ENCODE measurements at regions of chr6 and their contacts with region 1.

Region 1: DNA sequence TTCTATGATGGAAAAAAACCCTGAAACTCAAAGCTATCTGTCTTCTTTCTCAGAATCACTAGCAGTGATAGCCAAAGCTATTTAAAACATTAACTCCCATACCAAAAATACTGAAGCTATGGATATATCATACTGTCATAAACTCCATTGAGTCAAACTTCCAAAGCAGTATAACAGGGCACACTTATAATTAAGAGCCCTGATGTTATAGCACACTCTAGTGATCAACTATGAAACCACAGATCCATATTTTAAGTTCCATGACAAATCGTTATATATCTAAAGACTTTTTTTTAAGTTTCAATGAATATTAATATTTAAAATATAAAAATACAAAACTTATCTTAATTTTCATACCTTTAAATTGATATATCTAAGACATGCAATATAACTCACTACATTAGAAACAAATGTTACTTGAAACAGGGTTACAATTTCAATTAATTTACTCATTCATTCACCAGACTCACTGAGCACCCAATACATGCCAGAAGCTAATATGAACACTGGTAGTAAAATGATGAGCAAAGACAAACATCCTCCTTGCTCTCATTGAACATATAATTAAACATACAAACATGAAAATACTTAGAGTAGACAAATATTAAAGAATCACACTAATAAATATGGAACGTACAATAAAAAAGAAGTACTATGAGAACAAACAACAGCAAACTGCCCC is 69.3 kb downstream of the IBTK start:
- DNase-seq: no peak
- ATAC-seq: peak; percentile 55 to 87 (median 85)
- H3K4me3 ChIP-seq: no peak overlapping the region
- H3K27ac ChIP-seq: no peak overlapping the region
- H3K4me1 ChIP-seq: peaks cover 0 to 8% (median 0%) of the 10 kb centered on the region in 12 donors
- H3K27me3 ChIP-seq: no peaks in the 10 kb centered on the region
- CTCF ChIP-seq: peak; percentile 34 to 80 (median 63)
- POLR2A ChIP-seq: no peak

Region 2: DNA sequence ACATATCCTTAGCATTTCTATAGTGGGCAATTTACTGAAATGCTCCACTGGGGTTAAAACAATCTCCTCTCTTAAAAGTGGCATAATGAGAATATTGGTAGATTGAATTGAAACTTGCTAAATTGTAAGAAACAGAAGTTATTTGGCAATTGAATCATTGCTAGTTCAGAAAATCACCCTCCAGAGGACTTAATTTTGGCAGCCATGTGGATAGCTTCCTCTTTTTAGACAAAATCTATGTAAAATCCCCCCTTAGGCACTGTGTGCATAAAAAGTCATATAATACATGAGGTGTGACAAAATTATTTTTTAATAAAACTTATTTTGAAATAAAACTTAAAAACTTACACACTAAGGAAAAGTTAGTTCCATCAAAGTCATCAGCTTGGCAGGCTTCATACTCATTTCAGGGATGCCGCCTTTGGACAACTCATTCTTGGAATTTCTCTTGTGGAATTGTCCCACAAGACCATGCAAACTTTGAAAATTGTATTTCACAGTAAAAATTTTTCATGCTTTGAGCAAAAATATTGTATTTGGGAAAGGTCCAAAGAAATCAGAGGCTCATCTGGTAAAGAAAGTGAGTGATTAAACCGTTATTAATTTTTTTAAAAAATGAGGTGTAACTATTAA is 1598.7 kb before region 1 on chr6:
- intact Hi-C with region 1: no loop called
- DNase-seq: no peak
- ATAC-seq: no peak
- H3K4me3 ChIP-seq: no peak overlapping the region
- H3K27ac ChIP-seq: no peak overlapping the region
- H3K4me1 ChIP-seq: peaks cover 0 to 6% (median 0%) of the 10 kb centered on the region in 12 donors
- H3K27me3 ChIP-seq: no peaks in the 10 kb centered on the region
- CTCF ChIP-seq: no peak
- POLR2A ChIP-seq: no peak

Region 3: DNA sequence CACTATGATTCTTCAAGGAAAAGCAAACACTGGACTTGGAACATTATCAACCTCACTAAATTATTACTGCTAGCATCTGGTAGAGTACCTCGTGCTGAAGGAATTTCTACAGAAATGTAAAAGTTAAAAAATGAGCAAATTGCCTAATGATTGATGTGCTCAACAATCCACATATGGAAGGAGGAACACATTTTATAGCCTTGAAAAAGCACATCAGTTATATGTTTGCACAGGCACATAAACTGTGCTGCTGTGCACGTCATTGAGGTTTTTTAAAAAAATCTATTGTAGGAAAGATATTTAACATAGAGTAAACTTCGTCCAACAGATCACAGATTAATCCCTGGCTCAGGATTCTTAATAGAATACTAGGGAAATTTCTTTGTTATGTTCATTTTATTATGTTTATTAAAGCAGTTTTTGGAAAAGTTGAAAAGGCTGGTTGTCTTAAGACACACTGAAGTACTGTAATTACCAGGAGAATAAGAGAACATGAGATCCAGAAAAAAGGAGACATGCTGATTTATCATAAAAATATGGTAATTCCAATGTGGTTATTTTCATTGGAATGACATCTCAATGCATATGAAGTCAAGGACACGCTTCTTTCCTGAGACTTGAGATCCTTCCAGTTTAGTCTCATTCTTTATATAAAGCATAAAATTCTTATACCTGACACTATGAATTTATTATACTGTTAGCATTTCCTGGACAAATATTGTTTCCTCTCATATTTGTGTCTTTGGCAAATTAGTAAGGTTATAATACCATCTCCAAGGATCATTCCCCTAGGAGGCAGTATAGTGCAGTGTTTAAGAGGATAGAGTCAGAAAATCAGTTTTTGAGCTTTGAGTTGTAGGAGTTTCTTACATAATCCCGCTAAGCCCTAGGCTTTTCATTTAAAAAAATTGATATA is 936.8 kb before region 1 on chr6:
- intact Hi-C with region 1: loop called in 3 of 10 experiments (anchors 2 to 10 kb)
- DNase-seq: no peak
- ATAC-seq: peak in 2 of 4 donors; percentile 45 to 55
- H3K4me3 ChIP-seq: no peak overlapping the region
- H3K27ac ChIP-seq: no peak overlapping the region
- H3K4me1 ChIP-seq: no peaks in the 10 kb centered on the region
- H3K27me3 ChIP-seq: no peaks in the 10 kb centered on the region
- CTCF ChIP-seq: peak in 11 of 12 donors; percentile 22 to 60 (median 42)
- POLR2A ChIP-seq: no peak

Region 4: DNA sequence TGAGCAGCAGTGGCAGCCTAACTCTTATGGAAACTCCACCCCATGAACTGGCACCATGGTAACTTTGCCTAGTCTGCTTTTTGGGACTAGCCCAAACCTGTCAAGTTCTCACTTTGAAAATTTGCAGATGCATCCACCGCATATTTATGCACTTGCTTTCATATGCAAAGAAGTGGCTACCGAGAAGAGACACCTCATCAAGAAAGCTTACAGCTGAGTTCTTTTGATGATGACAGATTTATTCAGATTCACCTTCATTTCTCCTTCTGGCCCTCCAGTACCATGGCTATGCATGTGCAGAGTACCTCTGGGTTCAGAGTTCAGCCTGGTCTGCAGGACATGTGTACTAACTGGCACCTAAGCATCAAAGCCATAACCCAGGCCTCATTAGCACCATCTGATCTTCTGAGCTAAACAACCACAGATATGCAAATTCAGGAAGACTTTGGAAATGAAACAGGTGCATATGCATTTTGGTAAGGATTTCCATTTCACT is 271.5 kb before region 1 on chr6:
- intact Hi-C with region 1: loop called in 1 of 10 experiments (anchors 10 kb)
- DNase-seq: peak in 1 of 5 donors; percentile 33
- ATAC-seq: peak; percentile 56 to 76 (median 70)
- H3K4me3 ChIP-seq: no peak overlapping the region
- H3K27ac ChIP-seq: peak overlapping the region in 8 of 12 donors; percentile 13 to 67 (median 30)
- H3K4me1 ChIP-seq: peaks cover 0 to 38% (median 6%) of the 10 kb centered on the region in 12 donors
- H3K27me3 ChIP-seq: no peaks in the 10 kb centered on the region
- CTCF ChIP-seq: no peak
- POLR2A ChIP-seq: no peak

Region 5: GRCh38 chr6:82072751-82073150 is 105.5 kb before region 1 on chr6:
- intact Hi-C with region 1: loop called in 3 of 10 experiments (anchors 5 to 10 kb)
- DNase-seq: no peak
- ATAC-seq: no peak
- H3K4me3 ChIP-seq: no peak overlapping the region
- H3K27ac ChIP-seq: no peak overlapping the region
- H3K4me1 ChIP-seq: peaks cover 0 to 29% (median 6%) of the 10 kb centered on the region in 12 donors
- H3K27me3 ChIP-seq: no peaks in the 10 kb centered on the region
- CTCF ChIP-seq: no peak
- POLR2A ChIP-seq: no peak